SK-N-SH (cell line): ENCODE measurements at regions of chr2 and their contacts with region 1.

Region 1: DNA sequence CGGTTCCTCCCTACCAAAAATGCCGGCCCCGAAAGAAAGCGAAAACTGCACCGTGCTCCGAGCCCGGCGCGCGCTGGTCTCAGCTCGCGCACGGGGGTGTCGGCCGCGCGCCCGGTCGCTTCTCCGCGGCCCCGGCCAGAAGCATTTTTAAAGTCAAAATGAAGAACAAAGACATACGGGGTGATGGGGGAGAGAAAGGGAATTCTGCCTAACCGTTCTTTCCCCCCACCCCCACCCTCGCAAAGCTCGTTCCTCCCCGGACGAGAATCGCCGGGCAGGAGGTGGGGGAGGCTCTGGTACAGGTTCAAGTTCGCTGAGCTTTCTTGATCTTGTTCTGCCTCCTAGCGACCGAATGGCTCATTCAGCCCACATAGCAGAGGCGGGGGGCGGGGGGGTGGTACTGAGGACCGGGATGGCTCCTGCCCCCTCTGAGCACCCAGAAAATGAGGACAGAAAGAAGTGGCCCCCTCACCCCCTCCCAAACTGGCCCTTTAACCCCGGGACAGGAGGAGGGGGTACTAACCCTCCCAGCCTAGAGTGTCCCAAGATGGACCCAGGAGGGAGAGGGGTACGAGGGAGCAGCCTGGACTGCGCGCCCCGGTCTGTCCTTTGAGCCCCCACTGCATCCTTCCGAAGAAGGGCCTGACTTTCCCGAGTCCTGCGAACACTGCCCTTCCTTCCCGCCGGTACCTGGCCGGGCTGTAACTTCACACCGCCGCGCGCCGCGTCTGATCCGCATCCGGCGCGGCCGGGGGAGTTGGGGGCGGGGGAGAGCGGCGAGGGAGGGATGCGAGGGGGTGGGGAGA is 3.1 kb downstream of the BCL11A start:
- DNase-seq: peak; percentile 84
- H3K4me3 ChIP-seq: peak overlapping the region; percentile 75 to 98
- H3K27ac ChIP-seq: peak overlapping the region in 1 of 2 experiments; percentile 69; a peak in 2 of 4 replicates
- H3K4me1 ChIP-seq: peaks cover 0 to 35% of the 10 kb centered on the region in 2 experiments; a peak in 1 of 4 replicates
- H3K27me3 ChIP-seq: no peaks in the 10 kb centered on the region
- CTCF ChIP-seq: peak; percentile 93
- EP300 ChIP-seq: peak in 1 of 2 experiments; percentile 38; a peak in 1 of 4 replicates
- RAD21 ChIP-seq: peak; percentile 80

Region 2: GRCh38 chr2:59301466-59302402 is 1248.6 kb before region 1 on chr2:
- CTCF ChIA-PET with region 1: interaction called, 10 read pairs
- POLR2A ChIA-PET with region 1: no interaction called
- DNase-seq: peak; percentile 27
- H3K4me3 ChIP-seq: peak overlapping the region in 1 of 2 experiments; percentile 23; a peak in 1 of 4 replicates
- H3K27ac ChIP-seq: no peak overlapping the region
- H3K4me1 ChIP-seq: no peaks in the 10 kb centered on the region; a peak in 1 of 4 replicates
- H3K27me3 ChIP-seq: no peaks in the 10 kb centered on the region
- CTCF ChIP-seq: peak; percentile 59
- EP300 ChIP-seq: no peak
- RAD21 ChIP-seq: peak; percentile 61

Region 3: DNA sequence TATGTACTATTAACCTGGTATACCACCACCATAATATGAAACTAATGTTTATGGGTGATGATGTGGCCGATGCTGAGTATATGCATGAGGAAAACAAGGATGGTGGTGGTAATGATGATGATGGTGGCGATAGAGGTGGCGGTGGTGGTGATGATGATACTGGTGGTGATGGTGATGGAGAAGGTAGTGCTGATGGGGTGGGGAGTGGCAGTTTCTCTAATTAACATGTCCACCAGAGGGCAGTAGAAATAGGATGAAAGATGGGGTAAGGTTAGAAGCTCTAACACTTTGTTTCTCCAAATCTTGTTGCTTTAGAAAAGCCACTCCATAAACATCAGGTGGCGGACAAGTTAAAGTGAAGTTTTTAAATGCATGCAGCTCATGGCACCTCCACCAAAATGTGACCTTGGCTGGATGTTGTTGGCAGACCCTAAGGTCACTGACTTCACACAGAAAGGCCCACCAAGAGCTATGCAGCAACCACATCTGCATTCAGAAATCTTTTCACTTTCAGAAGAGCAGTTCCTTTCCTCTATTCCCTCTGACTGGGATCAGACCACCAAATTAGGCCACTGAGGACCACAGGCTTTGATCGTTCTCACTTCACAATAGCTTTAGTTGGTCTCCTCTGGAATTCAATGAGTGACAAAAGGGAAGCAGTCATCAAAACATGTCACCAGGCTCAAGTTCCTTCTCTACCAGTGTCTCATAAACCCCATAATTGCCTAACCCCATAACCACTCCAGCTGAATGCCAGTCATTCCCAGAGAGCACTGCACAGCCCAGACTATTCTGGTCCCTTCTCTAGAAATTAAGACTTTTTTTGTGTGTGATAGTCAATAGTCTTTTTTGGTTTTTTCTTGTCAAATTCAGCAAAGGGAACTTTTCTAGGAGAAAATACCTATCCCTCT is 10.6 kb after region 1 on chr2:
- CTCF ChIA-PET with region 1: interaction called, 24 read pairs
- POLR2A ChIA-PET with region 1: no interaction called
- DNase-seq: no peak
- H3K4me3 ChIP-seq: no peak overlapping the region
- H3K27ac ChIP-seq: no peak overlapping the region
- H3K4me1 ChIP-seq: 0 out of 4 replicates have a peak, but pooled peaks cover 0 to 6% of the 10 kb centered on the region in 2 experiments
- H3K27me3 ChIP-seq: peaks cover 33% of the 10 kb centered on the region
- CTCF ChIP-seq: peak; percentile 66
- EP300 ChIP-seq: no peak
- RAD21 ChIP-seq: peak; percentile 50